SK-N-SH (cell line): ENCODE measurements at regions of chr10 and their contacts with region 1.

Region 1: GRCh38 chr10:100743626-100744135 is 1.7 kb upstream of the PAX2 start:
- DNase-seq: peak; percentile 85
- H3K4me3 ChIP-seq: no peak overlapping the region; a peak in 2 of 4 replicates
- H3K27ac ChIP-seq: no peak overlapping the region
- H3K4me1 ChIP-seq: peaks cover 0 to 21% of the 10 kb centered on the region in 2 experiments; a peak in 1 of 4 replicates
- H3K27me3 ChIP-seq: peaks cover 98% of the 10 kb centered on the region
- CTCF ChIP-seq: peak; percentile 73
- EP300 ChIP-seq: no peak
- RAD21 ChIP-seq: peak; percentile 87

Region 2: DNA sequence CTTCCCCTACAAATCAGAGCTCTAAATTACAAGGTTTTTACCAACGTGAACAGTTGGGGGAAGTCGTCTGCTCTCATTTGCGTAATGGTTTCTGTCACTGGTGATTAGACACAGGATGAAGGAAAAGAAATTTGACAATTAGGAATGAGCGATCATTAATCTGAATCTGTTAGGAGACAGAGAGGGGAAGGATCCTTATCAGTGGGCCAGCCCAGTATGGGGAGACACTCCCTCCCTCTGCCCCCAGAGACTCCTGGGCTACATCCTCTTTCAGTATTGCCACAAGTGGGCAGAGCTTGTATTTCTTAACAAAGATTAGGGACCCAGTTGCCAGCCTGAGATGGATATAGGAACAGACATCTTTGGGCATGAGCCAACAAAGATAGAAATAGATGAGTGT is 192.5 kb before region 1 on chr10:
- CTCF ChIA-PET with region 1: interaction called, 16 read pairs
- POLR2A ChIA-PET with region 1: no interaction called
- DNase-seq: no peak
- H3K4me3 ChIP-seq: no peak overlapping the region
- H3K27ac ChIP-seq: no peak overlapping the region; a peak in 1 of 4 replicates
- H3K4me1 ChIP-seq: peaks cover 0 to 8% of the 10 kb centered on the region in 2 experiments; a peak in 1 of 4 replicates
- H3K27me3 ChIP-seq: no peaks in the 10 kb centered on the region
- CTCF ChIP-seq: no peak
- EP300 ChIP-seq: no peak
- RAD21 ChIP-seq: no peak

Region 3: DNA sequence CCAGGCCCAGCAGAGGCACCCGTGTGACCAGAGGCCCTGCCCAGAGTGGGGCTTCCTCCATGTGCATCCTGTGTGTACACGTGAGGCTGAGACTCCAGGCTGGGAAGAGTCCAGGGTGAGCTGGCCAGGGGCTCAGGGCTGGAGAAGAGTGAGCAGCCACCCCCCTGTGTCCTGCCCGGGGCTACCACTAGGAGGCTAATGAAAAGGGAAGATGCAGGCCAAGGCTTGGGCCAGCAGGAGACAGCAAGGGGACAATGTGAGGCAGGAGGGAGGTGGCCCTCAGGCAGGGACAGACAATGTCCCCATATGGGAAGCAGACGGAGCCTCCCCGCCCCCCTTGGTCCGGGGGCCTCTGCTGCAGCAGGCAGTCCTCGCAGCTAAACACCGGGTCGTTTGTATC is 105.9 kb before region 1 on chr10:
- CTCF ChIA-PET with region 1: interaction called, 20 read pairs
- POLR2A ChIA-PET with region 1: no interaction called
- DNase-seq: peak; percentile 87
- H3K4me3 ChIP-seq: no peak overlapping the region; a peak in 1 of 4 replicates
- H3K27ac ChIP-seq: no peak overlapping the region
- H3K4me1 ChIP-seq: peaks cover 0 to 14% of the 10 kb centered on the region in 2 experiments; a peak in 1 of 4 replicates
- H3K27me3 ChIP-seq: peaks cover 10% of the 10 kb centered on the region; the same call in 1 of the 2 replicates
- CTCF ChIP-seq: peak; percentile 42; the same call in 1 of the 2 replicates
- EP300 ChIP-seq: no peak
- RAD21 ChIP-seq: peak; percentile 50

Region 4: DNA sequence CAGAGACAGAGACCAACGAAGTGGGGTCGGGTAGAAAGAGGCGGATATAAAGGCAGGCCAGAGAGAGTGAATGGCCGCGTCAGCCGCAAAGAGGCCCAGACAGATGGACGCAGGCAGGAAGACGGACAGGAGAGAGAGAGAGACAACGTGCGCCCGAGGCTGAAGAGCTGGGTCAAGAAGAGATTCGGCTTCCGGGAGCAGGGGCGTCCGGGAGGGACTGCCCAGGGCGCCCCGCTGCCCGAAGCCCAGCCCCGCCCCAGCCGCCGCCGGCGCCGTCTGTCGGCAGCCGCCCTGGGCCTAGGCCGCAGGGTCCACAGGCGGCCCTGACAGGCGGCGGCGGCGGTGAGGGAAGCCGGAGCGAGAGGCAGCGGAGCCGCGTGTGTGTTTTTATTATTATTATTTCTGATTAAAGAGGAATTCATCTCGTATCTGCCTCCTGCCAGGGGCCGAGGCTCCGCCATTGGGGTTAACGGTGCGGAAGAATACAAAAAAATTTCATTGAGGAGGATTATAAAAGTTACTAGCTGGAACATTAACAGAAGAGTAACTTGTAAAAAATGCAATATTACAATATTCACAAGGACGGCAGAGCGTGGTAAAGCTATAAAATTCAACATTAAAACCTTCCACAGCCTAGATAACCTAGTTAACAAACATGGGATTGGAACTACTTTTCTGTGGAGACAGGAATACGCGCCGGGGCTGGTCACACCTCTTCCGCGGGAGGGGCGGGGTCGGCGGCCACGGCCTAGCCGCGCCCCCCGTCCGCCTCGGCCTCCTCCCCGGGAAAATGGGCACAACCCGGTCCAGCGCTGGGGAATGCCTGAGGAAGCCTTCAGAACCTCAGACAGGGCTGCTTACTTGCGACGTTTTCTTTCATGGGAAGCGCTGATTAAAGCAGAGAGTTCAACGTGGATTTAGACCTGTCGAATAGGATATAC is 28.0 kb before region 1 on chr10:
- CTCF ChIA-PET with region 1: interaction called, 19 read pairs
- POLR2A ChIA-PET with region 1: no interaction called
- DNase-seq: peak; percentile 24
- H3K4me3 ChIP-seq: no peak overlapping the region
- H3K27ac ChIP-seq: no peak overlapping the region
- H3K4me1 ChIP-seq: peaks cover 0 to 19% of the 10 kb centered on the region in 2 experiments; a peak in 2 of 4 replicates
- H3K27me3 ChIP-seq: peaks cover 34% of the 10 kb centered on the region
- CTCF ChIP-seq: no peak
- EP300 ChIP-seq: no peak
- RAD21 ChIP-seq: no peak

Region 5: GRCh38 chr10:100807241-100807951 is 63.7 kb after region 1 on chr10:
- CTCF ChIA-PET with region 1: interaction called, 79 read pairs
- POLR2A ChIA-PET with region 1: interaction called, 3 read pairs
- DNase-seq: no peak
- H3K4me3 ChIP-seq: no peak overlapping the region
- H3K27ac ChIP-seq: no peak overlapping the region
- H3K4me1 ChIP-seq: peaks cover 0 to 44% of the 10 kb centered on the region in 2 experiments; a peak in 2 of 4 replicates
- H3K27me3 ChIP-seq: peaks cover 30% of the 10 kb centered on the region; the same call in 1 of the 2 replicates
- CTCF ChIP-seq: no peak
- EP300 ChIP-seq: no peak
- RAD21 ChIP-seq: no peak

Region 6: GRCh38 chr10:100872034-100872791 is 128.5 kb after region 1 on chr10:
- CTCF ChIA-PET with region 1: interaction called, 267 read pairs
- POLR2A ChIA-PET with region 1: no interaction called
- DNase-seq: peak; percentile 91
- H3K4me3 ChIP-seq: no peak overlapping the region; a peak in 1 of 4 replicates
- H3K27ac ChIP-seq: 0 out of 4 replicates have a peak overlapping the region, but pooled peaks of 1 of the 2 experiments have one; percentile 7
- H3K4me1 ChIP-seq: no peaks in the 10 kb centered on the region; a peak in 2 of 4 replicates
- H3K27me3 ChIP-seq: no peaks in the 10 kb centered on the region
- CTCF ChIP-seq: peak; percentile 68
- EP300 ChIP-seq: no peak
- RAD21 ChIP-seq: peak; percentile 80

Region 7: GRCh38 chr10:101238732-101239105 is 495.0 kb after region 1 on chr10:
- CTCF ChIA-PET with region 1: no interaction called
- POLR2A ChIA-PET with region 1: no interaction called
- DNase-seq: no peak
- H3K4me3 ChIP-seq: peak overlapping the region in 1 of 2 experiments; percentile 32; a peak in 1 of 4 replicates
- H3K27ac ChIP-seq: no peak overlapping the region
- H3K4me1 ChIP-seq: no peaks in the 10 kb centered on the region
- H3K27me3 ChIP-seq: peaks cover 55% of the 10 kb centered on the region
- CTCF ChIP-seq: no peak
- EP300 ChIP-seq: no peak
- RAD21 ChIP-seq: no peak